A549 (cell line): ENCODE measurements at regions of chr5 and their contacts with region 1.

Region 1: GRCh38 chr5:58886315-58887207 is 303.7 kb downstream of the RAB3C start:
- DNase-seq: peak; percentile 77 to 93
- ATAC-seq: peak; percentile 27 to 68
- H3K4me3 ChIP-seq: no peak overlapping the region
- H3K27ac ChIP-seq: peak overlapping the region; percentile 94 to 100
- H3K4me1 ChIP-seq: peaks cover 50% of the 10 kb centered on the region
- CTCF ChIP-seq: peak; percentile 96
- EP300 ChIP-seq: no peak
- POLR2A ChIP-seq: no peak
- RAD21 ChIP-seq: peak; percentile 96 to 97

Region 2: GRCh38 chr5:58932057-58932612 is 45.6 kb after region 1 on chr5:
- CTCF ChIA-PET with region 1: interaction called, 4 read pairs
- POLR2A ChIA-PET with region 1: interaction called, 15 read pairs
- DNase-seq: peak; percentile 42 to 96
- ATAC-seq: peak; percentile 87
- H3K4me3 ChIP-seq: peak overlapping the region; percentile 38
- H3K27ac ChIP-seq: peak overlapping the region; percentile 84 to 88
- H3K4me1 ChIP-seq: peaks cover 66% of the 10 kb centered on the region
- CTCF ChIP-seq: no peak
- EP300 ChIP-seq: peak; percentile 76 to 84; a peak in 4 of 5 replicates
- POLR2A ChIP-seq: no peak
- RAD21 ChIP-seq: peak in 1 of 2 experiments; percentile 15; a peak in 1 of 5 replicates

Region 3: DNA sequence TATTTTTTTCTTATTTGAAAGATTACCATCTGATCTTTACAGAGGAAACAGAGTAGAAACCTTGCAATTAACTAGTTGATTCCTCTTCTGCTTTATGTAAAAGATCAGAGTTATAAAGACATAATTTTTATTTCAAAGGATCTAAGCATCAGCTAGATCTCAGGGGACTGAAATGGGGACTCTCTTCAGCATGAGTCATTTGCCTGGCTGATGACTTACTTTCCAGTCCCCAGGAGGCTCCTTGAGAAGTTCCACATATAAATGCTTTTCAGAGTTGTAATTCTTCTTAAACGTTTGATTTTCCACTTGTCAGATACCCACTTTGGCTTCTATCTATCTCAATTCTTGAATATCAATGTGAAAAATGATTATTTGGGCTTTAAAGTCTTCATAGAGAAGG is 85.7 kb after region 1 on chr5:
- CTCF ChIA-PET with region 1: interaction called, 33 read pairs
- POLR2A ChIA-PET with region 1: interaction called, 16 read pairs
- DNase-seq: no peak
- ATAC-seq: no peak
- H3K4me3 ChIP-seq: no peak overlapping the region
- H3K27ac ChIP-seq: peak overlapping the region; percentile 49 to 68; a peak in 5 of 6 replicates
- H3K4me1 ChIP-seq: peaks cover 99% of the 10 kb centered on the region
- CTCF ChIP-seq: no peak
- EP300 ChIP-seq: no peak
- POLR2A ChIP-seq: no peak
- RAD21 ChIP-seq: no peak

Region 4: GRCh38 chr5:59039296-59040023 is 152.9 kb after region 1 on chr5:
- CTCF ChIA-PET with region 1: interaction called, 15 read pairs
- POLR2A ChIA-PET with region 1: interaction called, 11 read pairs
- DNase-seq: peak in 1 of 2 experiments; percentile 85
- ATAC-seq: peak; percentile 63 to 68
- H3K4me3 ChIP-seq: peak overlapping the region; percentile 74
- H3K27ac ChIP-seq: peak overlapping the region; percentile 95 to 99
- H3K4me1 ChIP-seq: peaks cover 38% of the 10 kb centered on the region
- CTCF ChIP-seq: no peak
- EP300 ChIP-seq: peak; percentile 71 to 85; a peak in 3 of 5 replicates
- POLR2A ChIP-seq: peak; percentile 8; the same call in 1 of the 2 replicates
- RAD21 ChIP-seq: no peak; a peak in 1 of 5 replicates

Region 5: GRCh38 chr5:59367791-59368394 is 481.3 kb after region 1 on chr5:
- CTCF ChIA-PET with region 1: interaction called, 10 read pairs
- POLR2A ChIA-PET with region 1: interaction called, 3 read pairs
- DNase-seq: peak in 1 of 2 experiments; percentile 84
- ATAC-seq: peak; percentile 76 to 80; a peak in 5 of 6 replicates
- H3K4me3 ChIP-seq: no peak overlapping the region
- H3K27ac ChIP-seq: peak overlapping the region; percentile 64 to 86
- H3K4me1 ChIP-seq: peaks cover 87% of the 10 kb centered on the region
- CTCF ChIP-seq: peak; percentile 94
- EP300 ChIP-seq: no peak
- POLR2A ChIP-seq: no peak
- RAD21 ChIP-seq: peak; percentile 87